Dendritic cell treated with granulocyte-macrophage colony-stimulating factor and Interleukin-4, amounts not matched to agents 40 ng/mL and 50 ng/mL, for 4 days (primary cell): ENCODE measurements at regions of chr5 and their contacts with region 1.

Region 1: GRCh38 chr5:82165740-82166530 is 112.2 kb downstream of the RPS23 start:
- H3K4me3 Mint-ChIP-seq: no peak overlapping the region
- H3K27ac Mint-ChIP-seq: no peak overlapping the region
- H3K4me1 Mint-ChIP-seq: no peaks in the 10 kb centered on the region
- H3K27me3 Mint-ChIP-seq: no peaks in the 10 kb centered on the region

Region 2: DNA sequence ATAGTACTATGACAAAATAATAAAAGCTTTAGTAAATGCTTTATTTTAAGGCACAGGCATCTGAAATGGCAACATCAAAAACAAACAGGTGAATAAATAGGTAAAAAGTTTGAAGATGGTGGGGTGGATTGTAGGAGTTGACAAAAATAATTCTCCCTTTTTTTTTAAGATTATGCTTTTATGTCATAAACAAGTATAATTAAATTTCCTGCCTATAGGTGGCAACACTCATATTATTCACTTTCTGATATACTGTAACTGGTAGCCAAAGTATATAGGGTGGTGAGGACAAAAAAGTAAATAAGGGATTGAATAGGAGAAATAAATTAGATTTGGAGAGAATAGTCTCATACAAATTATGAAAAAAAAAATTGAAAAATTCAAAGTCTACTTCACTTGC is 652.0 kb before region 1 on chr5:
- intact Hi-C with region 1: loop called (anchors 5 kb)
- H3K4me3 Mint-ChIP-seq: no peak overlapping the region
- H3K27ac Mint-ChIP-seq: no peak overlapping the region
- H3K4me1 Mint-ChIP-seq: no peaks in the 10 kb centered on the region
- H3K27me3 Mint-ChIP-seq: no peaks in the 10 kb centered on the region

Region 3: DNA sequence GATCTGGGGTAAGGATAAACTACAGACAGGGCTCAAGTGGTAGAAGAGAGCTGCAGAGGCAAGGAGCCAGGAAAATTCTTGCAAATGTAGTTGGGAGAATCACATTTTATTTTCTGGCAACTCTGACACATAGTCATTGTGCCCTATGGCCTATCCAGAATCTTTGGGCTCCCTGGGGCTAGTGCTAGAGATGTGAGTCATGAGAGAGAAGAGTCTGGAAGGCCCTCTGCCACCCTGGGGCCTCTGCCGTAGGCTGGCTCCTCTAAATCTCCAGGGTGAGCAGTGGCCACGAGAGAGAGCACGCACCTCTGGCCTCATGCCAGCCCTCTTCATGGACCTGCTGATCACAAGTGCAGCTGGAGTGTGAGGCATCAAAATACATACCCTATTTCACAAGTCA is 340.7 kb before region 1 on chr5:
- intact Hi-C with region 1: no loop called
- H3K4me3 Mint-ChIP-seq: no peak overlapping the region
- H3K27ac Mint-ChIP-seq: no peak overlapping the region
- H3K4me1 Mint-ChIP-seq: peaks cover 25% of the 10 kb centered on the region
- H3K27me3 Mint-ChIP-seq: no peaks in the 10 kb centered on the region

Region 4: GRCh38 chr5:82107267-82107666 is 58.7 kb before region 1 on chr5:
- intact Hi-C with region 1: loop called (anchors 2 kb)
- H3K4me3 Mint-ChIP-seq: no peak overlapping the region
- H3K27ac Mint-ChIP-seq: no peak overlapping the region
- H3K4me1 Mint-ChIP-seq: peaks cover 10% of the 10 kb centered on the region
- H3K27me3 Mint-ChIP-seq: no peaks in the 10 kb centered on the region

Region 5: DNA sequence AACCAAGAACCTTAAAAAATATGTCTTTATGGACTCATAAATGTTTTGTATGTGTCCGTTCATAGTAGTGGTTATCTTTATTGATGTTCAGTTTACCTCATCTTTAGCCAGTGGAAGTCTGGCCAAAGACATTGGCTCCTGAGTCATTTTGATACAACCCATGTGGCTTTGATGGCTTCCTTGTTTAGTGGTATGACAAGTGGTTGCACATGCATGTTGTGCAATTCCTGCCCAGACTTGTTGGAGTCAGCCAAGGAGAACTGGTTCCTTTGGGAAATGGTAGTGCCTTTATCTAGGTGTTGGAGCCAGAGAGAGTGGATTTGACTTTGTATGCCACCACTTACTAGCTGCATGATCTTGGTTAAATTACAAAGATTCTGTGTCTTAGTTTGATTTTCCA is 17.9 kb after region 1 on chr5:
- intact Hi-C with region 1: no loop called
- H3K4me3 Mint-ChIP-seq: no peak overlapping the region
- H3K27ac Mint-ChIP-seq: no peak overlapping the region
- H3K4me1 Mint-ChIP-seq: no peaks in the 10 kb centered on the region
- H3K27me3 Mint-ChIP-seq: no peaks in the 10 kb centered on the region

Region 6: DNA sequence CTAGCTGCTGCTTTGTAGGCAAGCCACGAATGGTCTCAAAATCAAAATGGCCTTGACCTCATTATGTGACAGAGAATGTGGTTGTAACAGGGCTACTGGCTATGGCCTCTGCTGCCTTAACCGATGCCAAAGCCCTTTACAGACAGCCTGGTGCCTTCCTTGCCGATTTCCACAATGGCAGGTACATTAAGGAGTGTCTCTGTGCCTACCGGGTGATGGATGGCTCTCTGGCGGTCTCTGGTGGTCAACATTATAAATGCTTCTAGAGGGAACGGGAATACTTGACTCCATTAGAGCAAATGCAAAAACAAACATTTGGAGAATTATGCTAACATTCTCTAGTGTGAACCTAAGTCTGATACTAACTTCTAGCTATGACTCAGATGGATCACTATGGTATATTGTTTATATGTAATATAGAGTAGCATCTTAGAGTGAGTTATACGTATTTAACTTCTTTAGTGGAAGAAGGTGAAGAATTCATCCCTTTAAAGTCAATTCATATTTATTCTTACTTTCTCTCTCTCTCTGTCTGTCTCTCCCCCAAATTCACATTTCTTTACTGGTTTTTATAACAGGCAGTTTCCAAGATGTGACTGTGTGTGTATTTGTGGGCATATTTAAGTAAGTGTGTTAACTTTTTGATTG is 59.7 kb after region 1 on chr5:
- intact Hi-C with region 1: no loop called
- H3K4me3 Mint-ChIP-seq: no peak overlapping the region
- H3K27ac Mint-ChIP-seq: no peak overlapping the region
- H3K4me1 Mint-ChIP-seq: peaks cover 11% of the 10 kb centered on the region
- H3K27me3 Mint-ChIP-seq: no peaks in the 10 kb centered on the region